ENCODE measurements at regions of chr10 and their contacts with region 1.

Region 1: GRCh38 chr10:87861953-87862678 is 1.2 kb downstream of the KLLN start:
- DNase-seq: peak; percentile 89 to 98
- ATAC-seq: peak; percentile 71 to 82 (median 76)
- H3K4me3 ChIP-seq: peak overlapping the region; percentile 96
- H3K4me3 Mint-ChIP-seq: peak overlapping the region; percentile 100
- H3K27ac ChIP-seq: peak overlapping the region; percentile 74
- H3K27ac Mint-ChIP-seq: peak overlapping the region; percentile 95 to 97
- H3K4me1 ChIP-seq: peaks cover 11% of the 10 kb centered on the region
- H3K4me1 Mint-ChIP-seq: peaks cover 57 to 58% of the 10 kb centered on the region in 2 donors
- H3K27me3 ChIP-seq: no peaks in the 10 kb centered on the region
- H3K27me3 Mint-ChIP-seq: no peaks in the 10 kb centered on the region
- CTCF ChIP-seq: no peak

Region 2: DNA sequence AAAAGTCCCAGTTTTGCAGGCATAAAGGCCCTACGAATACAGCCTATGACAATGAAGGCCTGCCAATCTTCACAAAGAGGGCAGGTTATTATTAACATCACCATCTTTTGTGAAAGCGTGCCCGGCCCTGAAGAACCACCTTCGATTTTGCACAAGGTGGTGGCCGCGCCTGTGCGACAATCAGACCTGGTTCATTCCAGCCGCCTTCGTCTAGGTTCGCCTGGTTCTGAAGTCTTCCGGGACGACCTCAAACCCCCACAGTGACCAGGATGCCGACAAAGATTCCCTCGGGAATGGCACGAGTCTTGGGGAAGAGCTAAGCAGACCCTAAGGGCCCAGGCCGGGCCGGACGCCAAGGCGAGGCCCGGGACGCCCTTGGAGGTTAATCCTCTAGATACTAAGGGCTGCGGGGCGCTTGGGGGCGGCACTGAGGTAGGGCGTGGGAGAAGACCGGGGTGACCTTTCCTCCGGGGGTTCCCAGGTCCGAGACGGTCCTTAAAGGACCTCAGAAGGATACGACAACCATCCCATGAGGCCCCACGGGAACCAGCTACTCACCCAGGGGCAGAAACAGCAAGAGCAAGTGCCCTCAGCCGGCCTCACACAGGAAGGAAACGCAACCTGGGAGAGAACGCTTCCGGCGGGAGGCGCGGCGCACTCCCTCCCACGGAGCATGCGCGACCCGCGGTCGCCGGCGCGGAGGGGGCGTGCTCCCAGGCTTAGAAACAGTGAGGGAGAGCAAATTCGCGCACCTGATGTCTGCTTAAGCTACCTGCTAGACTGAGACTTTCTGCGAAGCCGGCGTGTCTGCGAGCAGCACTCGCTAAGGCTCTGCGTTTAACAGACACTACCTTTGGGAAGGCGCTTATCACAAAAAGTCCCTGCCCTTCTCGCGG is 44.3 kb before region 1 on chr10 and contains the start of gene ATAD1:
- intact Hi-C with region 1: loop called (anchors 1 kb)
- DNase-seq: peak; percentile 82 to 96
- ATAC-seq: peak; percentile 78 to 92 (median 86)
- H3K4me3 ChIP-seq: peak within 1 kb of the TSS; percentile 80
- H3K4me3 Mint-ChIP-seq: peak within 1 kb of the TSS; percentile 95
- H3K27ac ChIP-seq: peak within 1 kb of the TSS; percentile 84
- H3K27ac Mint-ChIP-seq: peak within 1 kb of the TSS; percentile 96 to 97
- H3K4me1 ChIP-seq: peaks cover 12% of the 10 kb centered on the region
- H3K4me1 Mint-ChIP-seq: peaks cover 38 to 41% of the 10 kb centered on the region in 2 donors
- H3K27me3 ChIP-seq: no peaks in the 10 kb centered on the region
- H3K27me3 Mint-ChIP-seq: peaks cover 0 to 2% of the 10 kb centered on the region in 2 donors
- CTCF ChIP-seq: no peak
- total RNA-seq, gene ATAD1: 37.5 to 55.2 (median 43.0) TPM

Region 3: DNA sequence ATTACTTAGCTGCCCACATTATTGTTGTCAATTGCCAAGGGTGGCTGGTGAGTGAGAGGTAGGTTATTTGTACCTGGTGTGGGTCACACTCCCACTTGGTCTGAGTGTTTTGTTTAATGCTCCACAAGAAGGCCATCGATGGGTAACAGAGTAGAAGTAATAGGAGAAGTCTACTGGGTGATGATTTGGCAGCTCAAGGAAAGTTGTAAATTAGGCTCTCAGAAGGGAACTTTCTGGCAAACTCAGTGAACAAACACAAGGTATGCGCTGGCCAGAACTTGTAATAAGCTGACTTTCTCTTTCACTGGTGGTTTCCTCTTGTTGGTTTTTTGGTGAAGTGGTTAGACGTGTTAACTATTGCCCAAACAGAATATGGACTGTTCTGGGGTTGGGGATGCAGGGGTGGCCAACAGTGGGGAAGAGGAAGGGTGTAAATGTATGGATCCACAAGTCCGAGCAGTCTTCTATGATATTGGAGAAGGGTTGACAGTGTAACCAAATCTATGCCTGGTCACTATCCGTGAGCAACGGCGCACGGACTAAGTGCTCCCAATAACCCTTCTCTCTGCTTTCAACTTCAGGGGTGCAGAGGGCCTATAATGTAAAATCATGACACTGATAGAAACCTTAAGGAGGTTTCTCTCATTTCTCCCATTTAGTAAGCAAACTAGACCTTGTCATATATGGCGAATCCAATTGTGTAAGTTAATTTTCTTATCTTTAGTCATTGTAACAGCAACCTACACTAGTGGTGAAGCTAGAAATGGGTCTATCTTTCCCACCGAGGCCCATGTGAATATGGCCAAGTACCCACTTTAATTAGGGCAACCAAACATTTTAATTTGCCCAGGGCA is 214.1 kb after region 1 on chr10:
- intact Hi-C with region 1: loop called (anchors 5 kb)
- DNase-seq: peak in 1 of 2 donors; percentile 23
- ATAC-seq: peak; percentile 71 to 91 (median 84)
- H3K4me3 ChIP-seq: no peak overlapping the region
- H3K4me3 Mint-ChIP-seq: peak overlapping the region; percentile 69
- H3K27ac ChIP-seq: no peak overlapping the region
- H3K27ac Mint-ChIP-seq: peak overlapping the region in 1 of 2 donors; percentile 65
- H3K4me1 ChIP-seq: peaks cover 22% of the 10 kb centered on the region
- H3K4me1 Mint-ChIP-seq: peaks cover 44 to 57% of the 10 kb centered on the region in 2 donors
- H3K27me3 ChIP-seq: peaks cover 2% of the 10 kb centered on the region
- H3K27me3 Mint-ChIP-seq: peaks cover 35 to 91% of the 10 kb centered on the region in 2 donors
- CTCF ChIP-seq: no peak

Region 4: DNA sequence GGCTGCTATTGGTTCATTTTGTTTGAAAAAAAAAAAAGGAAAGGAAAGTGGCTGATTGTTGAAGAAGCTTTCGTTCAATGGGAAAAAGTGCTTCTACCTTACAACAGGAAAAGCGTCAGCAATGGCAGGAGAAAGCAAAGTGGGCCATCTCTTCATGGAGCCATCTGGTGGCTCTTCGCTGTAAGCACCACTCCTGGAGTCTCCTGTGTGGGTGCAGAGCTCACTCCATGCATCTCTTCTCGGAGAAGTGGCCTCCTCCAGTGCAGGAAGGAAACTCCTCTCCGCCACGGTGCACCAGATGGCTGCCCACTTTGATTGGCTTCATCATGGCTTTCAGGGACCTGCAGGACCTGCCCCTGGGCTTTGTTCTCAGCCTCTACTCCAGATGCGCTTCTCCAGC is 252.3 kb after region 1 on chr10:
- intact Hi-C with region 1: loop called (anchors 1 kb)
- DNase-seq: peak in 1 of 2 donors; percentile 65
- ATAC-seq: peak; percentile 65 to 83 (median 83)
- H3K4me3 ChIP-seq: no peak overlapping the region
- H3K4me3 Mint-ChIP-seq: no peak overlapping the region
- H3K27ac ChIP-seq: no peak overlapping the region
- H3K27ac Mint-ChIP-seq: no peak overlapping the region
- H3K4me1 ChIP-seq: peaks cover 35% of the 10 kb centered on the region
- H3K4me1 Mint-ChIP-seq: peaks cover 12 to 18% of the 10 kb centered on the region in 2 donors
- H3K27me3 ChIP-seq: no peaks in the 10 kb centered on the region
- H3K27me3 Mint-ChIP-seq: no peaks in the 10 kb centered on the region
- CTCF ChIP-seq: peak; percentile 62

Measured in natural killer cell (primary cell).